AG04450 (cell line): ENCODE measurements at regions of chr1 and their contacts with region 1.

Region 1: DNA sequence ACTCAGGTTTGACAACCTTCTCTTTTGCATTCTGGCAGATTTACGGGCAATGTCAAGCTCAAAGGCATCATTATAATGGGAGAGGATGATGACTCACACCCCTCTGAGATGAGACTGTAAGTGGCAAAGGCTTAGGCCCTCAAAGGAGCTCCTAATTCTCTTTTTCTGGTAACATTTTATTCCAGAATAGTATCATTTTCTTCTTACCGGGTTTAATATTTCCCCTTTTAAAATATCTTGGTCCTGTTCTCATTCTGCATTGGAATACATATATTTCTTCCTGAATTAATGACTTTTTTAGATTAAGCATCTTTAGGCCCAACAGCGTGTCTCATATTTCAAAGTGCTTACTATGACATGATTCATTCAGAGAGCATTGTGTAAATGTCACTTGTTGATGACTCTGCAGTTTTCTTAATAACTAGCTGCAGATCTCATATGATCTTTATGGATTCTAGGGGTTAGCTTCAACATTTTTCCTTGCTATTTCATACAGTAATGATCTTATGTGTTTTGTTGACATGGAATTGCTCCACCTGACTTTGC is 1.7 kb downstream of the PITHD1 start:
- DNase-seq: no peak
- H3K4me3 ChIP-seq: peak overlapping the region; percentile 85
- H3K27ac ChIP-seq: peak overlapping the region; percentile 12
- H3K27me3 ChIP-seq: no peaks in the 10 kb centered on the region
- CTCF ChIP-seq: no peak

Region 2: GRCh38 chr1:23790696-23791515 is 11.0 kb after region 1 on chr1 and contains the start of gene LYPLA2:
- CTCF ChIA-PET with region 1: interaction called, 3 read pairs
- POLR2A ChIA-PET with region 1: interaction called, 11 read pairs
- DNase-seq: peak; percentile 72
- H3K4me3 ChIP-seq: peak within 1 kb of the TSS; percentile 90
- H3K27ac ChIP-seq: peak within 1 kb of the TSS; percentile 80
- H3K27me3 ChIP-seq: no peaks in the 10 kb centered on the region
- CTCF ChIP-seq: no peak
- polyA plus RNA-seq, gene LYPLA2: 27.1 and 37.8 TPM in 2 replicates

Region 3: GRCh38 chr1:23845163-23845562 is 65.3 kb after region 1 on chr1:
- CTCF ChIA-PET with region 1: no interaction called
- POLR2A ChIA-PET with region 1: no interaction called
- DNase-seq: no peak
- H3K4me3 ChIP-seq: no peak overlapping the region
- H3K27ac ChIP-seq: no peak overlapping the region
- H3K27me3 ChIP-seq: peaks cover 14% of the 10 kb centered on the region
- CTCF ChIP-seq: no peak